Dendritic cell treated with granulocyte-macrophage colony-stimulating factor and Interleukin-4, amounts not matched to agents 40 ng/mL and 50 ng/mL, for 4 days (primary cell): ENCODE measurements at regions of chr10 and their contacts with region 1.

Region 1: GRCh38 chr10:75099952-75100763 is 11.3 kb upstream of the SAMD8 start:
- H3K4me3 Mint-ChIP-seq: no peak overlapping the region
- H3K27ac Mint-ChIP-seq: peak overlapping the region; percentile 54
- H3K4me1 Mint-ChIP-seq: peaks cover 26% of the 10 kb centered on the region
- H3K27me3 Mint-ChIP-seq: peaks cover 5% of the 10 kb centered on the region

Region 2: GRCh38 chr10:74244097-74244685 is 856.0 kb before region 1 on chr10:
- intact Hi-C with region 1: loop called (anchors 2 kb)
- H3K4me3 Mint-ChIP-seq: no peak overlapping the region
- H3K27ac Mint-ChIP-seq: no peak overlapping the region
- H3K4me1 Mint-ChIP-seq: peaks cover 1% of the 10 kb centered on the region
- H3K27me3 Mint-ChIP-seq: no peaks in the 10 kb centered on the region